Psoas muscle (tissue), 8 donors: ENCODE measurements at regions of chr15 and their contacts with region 1.

Region 1: DNA sequence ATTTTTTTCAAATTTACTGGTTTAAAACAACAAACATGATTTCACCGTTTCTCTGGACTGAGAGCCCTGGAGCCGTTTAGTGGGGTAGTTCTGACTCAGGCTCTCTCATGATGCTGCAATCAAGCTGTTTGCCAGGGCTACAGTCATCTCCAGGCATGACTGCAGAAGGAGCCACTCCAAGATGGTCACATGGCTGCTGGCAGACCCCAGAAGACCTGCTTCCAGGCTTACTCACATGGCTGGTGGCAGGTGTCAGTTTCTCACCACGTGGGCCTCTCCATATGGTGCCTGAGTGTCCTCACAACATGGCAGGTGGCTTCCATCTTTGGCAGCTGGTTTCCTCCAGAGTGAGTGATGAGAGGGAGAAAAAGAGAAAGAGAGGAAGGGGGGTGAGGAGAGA is 378.3 kb upstream of the RGMA start:
- DNase-seq: peak; percentile 87 to 95
- ATAC-seq: peak; percentile 98 to 100 (median 100)
- H3K4me3 ChIP-seq: no peak overlapping the region
- H3K27ac ChIP-seq: peak overlapping the region; percentile 54
- H3K4me1 ChIP-seq: peaks cover 12% of the 10 kb centered on the region
- H3K27me3 ChIP-seq: no peaks in the 10 kb centered on the region
- CTCF ChIP-seq: no peak

Region 2: DNA sequence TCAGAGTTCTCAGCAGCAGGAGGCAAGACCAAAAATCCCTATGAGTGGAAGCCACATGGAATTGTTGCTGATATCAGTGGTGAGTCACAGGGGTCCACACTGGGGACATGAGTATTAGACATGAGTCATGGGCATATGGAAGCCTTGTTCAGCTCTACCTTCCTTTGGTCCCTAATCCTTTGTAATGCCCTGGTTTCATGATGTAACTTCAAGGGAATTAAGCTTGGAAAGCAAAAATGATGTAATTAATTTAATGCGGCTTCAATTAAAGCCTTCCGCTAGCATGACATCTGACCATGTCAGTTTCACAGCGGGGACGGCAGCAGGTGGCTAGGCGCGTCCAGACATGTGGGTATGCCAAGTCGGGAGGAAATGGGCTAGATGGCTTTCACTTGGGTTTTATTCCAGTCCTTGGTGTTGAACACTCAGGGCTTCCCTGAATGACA is 202.2 kb before region 1 on chr15:
- intact Hi-C with region 1: no loop called
- DNase-seq: no peak
- ATAC-seq: peak; percentile 32 to 79 (median 61)
- H3K4me3 ChIP-seq: no peak overlapping the region
- H3K27ac ChIP-seq: no peak overlapping the region
- H3K4me1 ChIP-seq: no peaks in the 10 kb centered on the region
- H3K27me3 ChIP-seq: no peaks in the 10 kb centered on the region
- CTCF ChIP-seq: no peak

Region 3: DNA sequence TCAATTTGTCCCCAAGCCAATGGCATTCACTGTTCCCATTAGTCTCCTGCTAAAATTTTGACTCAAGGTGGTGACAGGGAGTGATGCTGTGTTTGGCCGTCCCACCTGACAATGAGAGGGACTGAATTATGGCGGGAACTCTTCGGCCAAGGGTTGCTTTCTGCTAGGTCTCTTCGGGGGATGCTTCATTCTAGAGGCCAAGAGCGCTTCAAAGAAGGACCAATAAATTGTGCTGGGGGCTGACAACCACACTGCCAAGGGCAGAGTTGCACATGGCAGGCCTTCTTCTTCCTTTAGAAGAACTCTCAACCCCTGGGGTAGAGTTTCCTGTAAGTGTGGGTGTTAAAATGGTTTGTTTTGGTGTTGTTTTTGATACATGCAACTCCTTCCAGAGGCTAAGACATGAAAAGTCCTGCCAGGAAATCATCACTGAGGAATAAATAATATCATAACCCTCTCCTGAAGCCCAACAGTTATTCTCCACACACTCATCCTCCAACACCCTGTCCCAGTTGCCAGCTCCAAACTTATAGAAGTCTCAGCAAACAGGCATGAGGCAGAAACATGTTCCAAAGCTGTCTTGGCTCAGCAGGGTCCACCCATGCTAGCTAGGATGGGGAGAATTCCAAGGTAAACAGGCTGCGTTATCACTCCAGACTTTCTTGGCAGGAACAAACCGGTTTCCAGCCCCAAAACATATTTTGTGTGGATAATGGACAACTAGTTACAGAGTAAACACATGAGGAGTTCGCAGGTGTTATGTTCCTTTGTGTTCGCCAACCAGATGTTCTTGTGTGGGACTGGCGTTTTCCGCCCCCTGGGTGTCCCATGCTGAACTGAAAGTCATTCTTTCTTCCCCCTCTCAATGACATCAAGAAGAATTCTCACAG is 18.4 kb after region 1 on chr15:
- intact Hi-C with region 1: loop called in 1 of 2 experiments (anchors 2 kb)
- DNase-seq: peak; percentile 47 to 84
- ATAC-seq: peak; percentile 40 to 76 (median 58)
- H3K4me3 ChIP-seq: no peak overlapping the region
- H3K27ac ChIP-seq: peak overlapping the region; percentile 80
- H3K4me1 ChIP-seq: peaks cover 18% of the 10 kb centered on the region
- H3K27me3 ChIP-seq: no peaks in the 10 kb centered on the region
- CTCF ChIP-seq: no peak

Region 4: GRCh38 chr15:93515256-93516051 is 48.1 kb after region 1 on chr15:
- intact Hi-C with region 1: loop called in 1 of 2 experiments (anchors 5 kb)
- DNase-seq: peak; percentile 55 to 59
- ATAC-seq: peak; percentile 74 to 91 (median 82)
- H3K4me3 ChIP-seq: no peak overlapping the region
- H3K27ac ChIP-seq: peak overlapping the region; percentile 81
- H3K4me1 ChIP-seq: peaks cover 31% of the 10 kb centered on the region
- H3K27me3 ChIP-seq: no peaks in the 10 kb centered on the region
- CTCF ChIP-seq: no peak

Region 5: GRCh38 chr15:93771196-93772030 is 304.1 kb after region 1 on chr15:
- intact Hi-C with region 1: no loop called
- DNase-seq: no peak
- ATAC-seq: no peak
- H3K4me3 ChIP-seq: no peak overlapping the region
- H3K27ac ChIP-seq: no peak overlapping the region
- H3K4me1 ChIP-seq: no peaks in the 10 kb centered on the region
- H3K27me3 ChIP-seq: no peaks in the 10 kb centered on the region
- CTCF ChIP-seq: no peak